Activated B cell treated with CpG ODN at 0.5 μM for 24 hours (primary cell): ENCODE measurements at regions of chr3 and their contacts with region 1.

Region 1: DNA sequence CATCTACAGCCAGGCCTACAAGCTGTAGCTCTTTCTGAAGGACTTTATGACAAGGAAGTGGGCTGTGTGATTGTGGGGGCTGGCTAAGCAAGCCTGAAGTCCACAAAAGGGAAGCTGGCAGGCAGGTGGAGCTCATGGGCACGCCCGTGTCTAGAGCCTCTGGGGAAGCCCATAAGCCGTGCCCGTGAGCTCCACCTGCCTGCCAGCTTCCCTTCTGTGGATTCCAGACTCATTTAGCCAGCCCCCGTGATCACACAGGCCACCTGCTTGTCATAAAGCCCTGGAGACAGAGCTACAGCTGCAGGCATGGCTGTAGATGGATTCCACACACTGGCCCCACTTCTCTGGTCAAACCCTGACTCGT is 15.2 kb downstream of the EFCC1 start:
- DNase-seq: peak; percentile 59
- ATAC-seq: peak; percentile 87
- H3K4me3 Mint-ChIP-seq: peak overlapping the region; percentile 55
- H3K27ac Mint-ChIP-seq: peak overlapping the region; percentile 80
- H3K4me1 Mint-ChIP-seq: peaks cover 41% of the 10 kb centered on the region
- H3K27me3 Mint-ChIP-seq: no peaks in the 10 kb centered on the region
- CTCF ChIP-seq: no peak

Region 2: DNA sequence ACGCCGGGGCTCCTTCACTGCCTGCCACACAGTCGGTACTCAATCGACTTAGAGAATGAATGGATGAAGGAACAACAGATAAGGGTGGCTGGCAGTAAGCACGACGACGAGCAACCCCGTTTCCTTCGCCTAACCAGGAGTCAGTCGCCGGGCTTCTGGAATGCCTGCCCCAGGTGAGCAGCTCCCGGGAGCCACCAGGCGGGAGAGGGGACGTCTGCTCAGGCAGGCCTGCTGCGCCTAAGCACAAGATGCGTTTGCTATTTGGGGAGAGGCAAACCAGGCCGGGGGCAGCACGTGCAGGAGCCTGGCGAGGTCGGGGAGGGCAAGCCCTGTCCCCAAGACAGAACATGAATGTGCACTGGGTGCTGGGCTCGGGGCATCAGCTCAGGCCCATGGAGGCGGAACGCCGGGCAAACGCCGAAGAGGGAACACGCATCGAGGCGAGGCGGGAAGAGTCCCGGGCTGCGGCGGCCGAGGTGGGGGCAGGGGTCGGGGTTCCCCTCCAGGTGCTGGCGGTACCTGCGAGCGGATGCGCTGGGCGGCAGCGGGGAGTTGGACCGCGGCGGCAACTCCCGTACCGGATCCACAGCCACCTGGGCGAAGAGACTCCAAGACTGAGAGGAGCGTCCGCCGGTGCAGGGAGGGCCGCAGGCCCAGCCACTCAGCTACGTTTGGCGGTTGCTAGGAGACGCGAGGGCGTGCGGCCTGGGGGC is 22.7 kb before region 1 on chr3 and contains the start of gene CFAP92:
- CTCF ChIA-PET with region 1: interaction called, 10 read pairs
- POLR2A ChIA-PET with region 1: interaction called, 17 read pairs
- intact Hi-C with region 1: loop called (anchors 1 kb)
- DNase-seq: peak; percentile 88
- ATAC-seq: peak; percentile 98
- H3K4me3 Mint-ChIP-seq: peak within 1 kb of the TSS; percentile 60
- H3K27ac Mint-ChIP-seq: peak within 1 kb of the TSS; percentile 41
- H3K4me1 Mint-ChIP-seq: peaks cover 28% of the 10 kb centered on the region
- H3K27me3 Mint-ChIP-seq: peaks cover 15% of the 10 kb centered on the region
- CTCF ChIP-seq: no peak
- total RNA-seq, gene CFAP92: not detected in 2 replicates

Region 3: GRCh38 chr3:129003578-129004160 is 12.7 kb before region 1 on chr3:
- CTCF ChIA-PET with region 1: interaction called, 11 read pairs
- POLR2A ChIA-PET with region 1: interaction called, 12 read pairs
- intact Hi-C with region 1: loop called (anchors 1 kb)
- DNase-seq: peak; percentile 34
- ATAC-seq: peak; percentile 80
- H3K4me3 Mint-ChIP-seq: peak overlapping the region; percentile 44
- H3K27ac Mint-ChIP-seq: no peak overlapping the region
- H3K4me1 Mint-ChIP-seq: peaks cover 18% of the 10 kb centered on the region
- H3K27me3 Mint-ChIP-seq: peaks cover 45% of the 10 kb centered on the region
- CTCF ChIP-seq: no peak

Region 4: GRCh38 chr3:129026728-129027543 is 10.6 kb after region 1 on chr3:
- CTCF ChIA-PET with region 1: interaction called, 29 read pairs
- POLR2A ChIA-PET with region 1: interaction called, 45 read pairs
- intact Hi-C with region 1: loop called (anchors 1 kb)
- DNase-seq: peak; percentile 83
- ATAC-seq: peak; percentile 97
- H3K4me3 Mint-ChIP-seq: peak overlapping the region; percentile 85
- H3K27ac Mint-ChIP-seq: peak overlapping the region; percentile 94
- H3K4me1 Mint-ChIP-seq: peaks cover 12% of the 10 kb centered on the region
- H3K27me3 Mint-ChIP-seq: no peaks in the 10 kb centered on the region
- CTCF ChIP-seq: no peak

Region 5: GRCh38 chr3:129052675-129053074 is 36.3 kb after region 1 on chr3:
- CTCF ChIA-PET with region 1: interaction called, 16 read pairs
- POLR2A ChIA-PET with region 1: no interaction called
- intact Hi-C with region 1: no loop called
- DNase-seq: no peak
- ATAC-seq: no peak
- H3K4me3 Mint-ChIP-seq: no peak overlapping the region
- H3K27ac Mint-ChIP-seq: no peak overlapping the region
- H3K4me1 Mint-ChIP-seq: peaks cover 6% of the 10 kb centered on the region
- H3K27me3 Mint-ChIP-seq: peaks cover 23% of the 10 kb centered on the region
- CTCF ChIP-seq: no peak